ENCODE measurements at regions of chr1 and their contacts with region 1.

Region 1: DNA sequence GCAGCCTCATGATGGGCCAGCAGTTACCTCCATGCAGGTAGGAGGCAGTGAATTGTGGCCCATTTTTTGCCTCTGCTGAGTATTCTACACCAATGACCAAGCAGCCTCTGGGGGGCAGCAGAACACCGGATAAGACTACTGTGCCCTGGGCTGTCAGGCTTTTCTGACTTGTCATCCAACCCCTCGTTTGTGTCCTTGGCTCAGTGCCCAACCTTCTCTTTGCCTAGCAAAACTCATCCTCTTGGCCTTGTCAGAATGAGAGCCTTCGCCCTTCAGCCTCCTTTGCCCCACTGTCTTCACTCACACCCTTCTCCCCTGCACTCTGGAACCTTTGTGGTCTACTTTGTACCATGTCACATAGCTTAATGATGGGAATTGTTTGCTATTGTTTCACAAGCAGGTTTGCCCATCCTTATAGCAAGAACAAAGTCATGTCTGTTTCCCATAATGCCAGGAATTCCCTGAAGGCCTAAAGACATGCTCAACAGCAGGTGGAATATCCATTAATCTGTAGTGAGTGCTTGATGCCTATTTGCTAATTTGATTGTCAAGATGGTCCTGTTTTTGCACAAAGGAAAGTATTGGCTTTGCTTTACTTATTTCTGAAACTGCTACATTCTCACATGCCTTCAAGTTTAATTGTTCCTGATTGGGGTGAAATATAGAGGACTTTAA is 255.9 kb downstream of the HHAT start:
- DNase-seq: peak; percentile 86 to 98 (median 94)
- H3K4me3 ChIP-seq: no peak overlapping the region
- H3K27ac ChIP-seq: peak overlapping the region in 53 of 59 donors; percentile 3 to 86 (median 66)
- H3K27me3 ChIP-seq: no peaks in the 10 kb centered on the region
- CTCF ChIP-seq: peak; percentile 53 to 96 (median 87)

Region 2: DNA sequence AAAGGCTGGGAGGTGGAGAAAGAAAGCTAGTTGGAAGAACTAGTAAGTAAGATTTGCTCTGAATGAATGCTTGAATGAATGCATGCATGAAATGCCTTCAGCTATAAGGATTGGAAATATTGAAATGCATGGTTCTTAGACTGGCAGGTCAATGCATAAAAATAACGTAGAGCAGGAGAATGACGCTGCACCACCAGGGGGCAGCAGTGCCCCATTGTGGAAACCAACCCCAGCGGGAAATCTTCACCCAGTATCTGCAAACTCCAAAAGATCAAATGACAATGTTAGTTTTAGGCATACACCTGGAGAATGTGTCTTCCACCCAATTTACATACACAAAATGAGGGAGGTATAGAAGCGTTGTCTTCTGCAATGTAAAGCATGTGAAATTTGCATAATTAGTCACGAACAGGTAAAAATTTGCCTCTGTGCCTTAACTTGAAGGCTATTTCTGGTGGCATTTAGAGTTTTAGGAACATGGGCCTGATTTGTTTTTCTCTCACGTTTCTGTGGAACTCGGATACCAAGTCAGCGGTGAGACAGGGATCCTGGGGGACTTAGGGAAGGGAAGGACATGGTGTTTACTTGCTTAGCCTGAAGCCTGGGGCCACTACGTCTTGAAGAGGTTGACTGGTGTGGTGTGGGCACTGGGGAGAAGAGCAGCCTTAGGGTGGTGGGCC is 177.2 kb before region 1 on chr1:
- intact Hi-C with region 1: loop called (anchors 5 kb)
- DNase-seq: peak; percentile 70 to 90 (median 84)
- H3K4me3 ChIP-seq: no peak overlapping the region
- H3K27ac ChIP-seq: no peak overlapping the region
- H3K27me3 ChIP-seq: no peaks in the 10 kb centered on the region
- CTCF ChIP-seq: peak; percentile 92 to 100 (median 97)

Region 3: GRCh38 chr1:210448297-210448892 is 136.2 kb before region 1 on chr1:
- intact Hi-C with region 1: loop called (anchors 2 to 5 kb)
- DNase-seq: peak in 2 of 10 donors; percentile 34 to 53
- H3K4me3 ChIP-seq: no peak overlapping the region
- H3K27ac ChIP-seq: no peak overlapping the region
- H3K27me3 ChIP-seq: no peaks in the 10 kb centered on the region
- CTCF ChIP-seq: peak; percentile 43 to 89 (median 71)

Region 4: DNA sequence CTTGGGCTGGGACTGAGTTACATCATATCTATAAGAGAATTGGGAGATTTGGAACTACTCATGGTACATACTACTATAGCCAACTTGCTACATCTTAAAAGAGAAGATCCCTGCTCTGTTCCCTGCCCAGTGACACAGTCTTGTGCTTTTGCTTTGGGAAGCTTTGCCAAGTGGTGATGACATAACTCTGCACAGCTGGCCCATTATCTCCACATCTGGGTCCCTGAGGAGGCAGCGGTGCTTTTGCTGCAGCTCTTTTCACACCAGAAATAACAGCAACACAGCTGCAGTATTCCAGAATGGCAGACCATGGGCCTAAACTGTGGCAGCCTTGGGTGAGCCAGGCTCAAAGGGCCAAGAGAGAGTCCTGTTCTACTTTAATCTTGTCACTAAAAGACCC is 40.1 kb after region 1 on chr1:
- intact Hi-C with region 1: loop called in 1 of 2 experiments (anchors 5 kb)
- DNase-seq: peak in 7 of 10 donors; percentile 46 to 66 (median 56)
- H3K4me3 ChIP-seq: no peak overlapping the region
- H3K27ac ChIP-seq: peak overlapping the region; percentile 21 to 91 (median 82)
- H3K27me3 ChIP-seq: no peaks in the 10 kb centered on the region
- CTCF ChIP-seq: no peak

Region 5: DNA sequence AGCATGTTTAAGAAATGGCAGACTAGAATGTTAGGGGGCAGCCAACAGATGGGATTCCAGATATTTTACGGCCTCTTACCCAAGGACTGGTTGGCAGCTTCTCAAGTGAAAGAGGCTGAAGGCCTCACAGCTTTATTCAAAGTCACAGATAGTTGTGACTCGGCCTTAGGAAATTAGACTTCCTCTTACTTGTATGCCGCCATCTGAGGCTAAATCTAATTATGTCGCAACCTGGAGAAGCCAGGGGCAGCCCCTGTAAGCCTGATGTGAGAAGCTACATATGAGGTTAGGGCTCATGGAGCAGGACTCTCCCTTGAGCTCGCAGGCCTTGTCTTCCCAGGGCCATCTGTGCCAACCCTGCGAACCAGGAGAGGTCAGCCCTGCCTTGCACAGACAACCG is 96.6 kb after region 1 on chr1:
- intact Hi-C with region 1: no loop called
- DNase-seq: no peak
- H3K4me3 ChIP-seq: no peak overlapping the region
- H3K27ac ChIP-seq: no peak overlapping the region
- H3K27me3 ChIP-seq: no peaks in the 10 kb centered on the region
- CTCF ChIP-seq: no peak

Region 6: GRCh38 chr1:210850556-210850955 is 266.0 kb after region 1 on chr1:
- intact Hi-C with region 1: loop called (anchors 2 to 10 kb)
- DNase-seq: peak; percentile 37 to 89 (median 80)
- H3K4me3 ChIP-seq: peak overlapping the region in 4 of 59 donors; percentile 2 to 33 (median 15)
- H3K27ac ChIP-seq: peak overlapping the region; percentile 76 to 99 (median 93)
- H3K27me3 ChIP-seq: no peaks in the 10 kb centered on the region
- CTCF ChIP-seq: peak in 26 of 56 donors; percentile 7 to 43 (median 26)

Region 7: DNA sequence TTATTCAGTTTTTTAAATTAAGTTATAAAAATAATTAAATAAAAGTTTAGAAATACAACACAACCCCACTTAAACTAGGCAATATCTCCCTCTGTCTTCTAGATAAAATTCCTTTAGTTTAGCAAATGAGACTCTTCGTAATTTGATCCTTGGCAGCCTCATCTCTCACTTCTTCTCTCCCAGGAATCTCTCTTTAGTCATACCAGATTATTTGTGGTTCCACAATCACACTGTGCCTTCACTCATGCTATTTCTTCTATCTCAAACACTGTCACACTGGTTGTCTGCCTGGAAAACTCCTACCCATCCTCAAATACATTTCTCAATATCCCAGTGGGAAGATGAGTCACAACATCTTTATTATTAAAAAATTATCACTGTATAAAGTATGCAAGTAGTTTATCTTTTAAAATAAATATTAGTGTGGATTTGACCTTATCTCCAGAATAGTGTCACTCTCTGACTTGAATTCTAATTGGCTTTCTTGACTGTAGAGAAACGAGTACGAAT is 353.9 kb after region 1 on chr1:
- intact Hi-C with region 1: loop called (anchors 10 kb)
- DNase-seq: no peak
- H3K4me3 ChIP-seq: no peak overlapping the region
- H3K27ac ChIP-seq: peak overlapping the region in 1 of 59 donors; percentile 5
- H3K27me3 ChIP-seq: no peaks in the 10 kb centered on the region
- CTCF ChIP-seq: no peak

Region 8: DNA sequence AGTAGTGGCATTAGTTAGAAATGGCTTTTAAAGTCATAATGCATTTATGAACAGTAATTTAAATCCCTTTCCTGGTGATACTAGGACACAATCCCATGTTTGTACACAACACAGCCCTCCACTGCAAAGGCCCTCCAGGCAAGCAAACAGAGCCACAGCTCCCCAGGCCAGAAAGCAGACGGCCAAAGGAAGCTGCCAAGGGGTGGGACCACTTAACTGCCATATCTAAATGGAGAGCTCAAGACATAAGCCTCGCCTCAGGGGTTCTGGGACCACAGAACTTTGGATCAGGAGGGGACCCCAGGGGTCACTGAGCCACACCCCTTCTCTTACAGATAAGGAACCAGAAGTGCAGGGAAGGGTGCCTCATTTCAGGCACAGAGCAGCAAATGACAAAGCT is 359.7 kb after region 1 on chr1:
- intact Hi-C with region 1: loop called (anchors 10 kb)
- DNase-seq: peak in 1 of 10 donors; percentile 60
- H3K4me3 ChIP-seq: no peak overlapping the region
- H3K27ac ChIP-seq: peak overlapping the region in 8 of 59 donors; percentile 1 to 54 (median 9)
- H3K27me3 ChIP-seq: no peaks in the 10 kb centered on the region
- CTCF ChIP-seq: no peak